Activated B cell treated with CpG ODN at 0.5 μM for 24 hours (primary cell): ENCODE measurements at regions of chr9 and their contacts with region 1.

Region 1: GRCh38 chr9:27333241-27334052 is 36.5 kb upstream of the EQTN start:
- DNase-seq: peak; percentile 48
- ATAC-seq: peak; percentile 96
- H3K4me3 Mint-ChIP-seq: no peak overlapping the region
- H3K27ac Mint-ChIP-seq: peak overlapping the region; percentile 36
- H3K4me1 Mint-ChIP-seq: peaks cover 13% of the 10 kb centered on the region
- H3K27me3 Mint-ChIP-seq: no peaks in the 10 kb centered on the region
- CTCF ChIP-seq: peak; percentile 38

Region 2: GRCh38 chr9:26502311-26502710 is 831.1 kb before region 1 on chr9:
- CTCF ChIA-PET with region 1: no interaction called
- POLR2A ChIA-PET with region 1: no interaction called
- intact Hi-C with region 1: no loop called
- DNase-seq: no peak
- ATAC-seq: no peak
- H3K4me3 Mint-ChIP-seq: no peak overlapping the region
- H3K27ac Mint-ChIP-seq: no peak overlapping the region
- H3K4me1 Mint-ChIP-seq: no peaks in the 10 kb centered on the region
- H3K27me3 Mint-ChIP-seq: no peaks in the 10 kb centered on the region
- CTCF ChIP-seq: no peak

Region 3: GRCh38 chr9:27108981-27109541 is 224.4 kb before region 1 on chr9 and contains the start of gene TEK:
- CTCF ChIA-PET with region 1: no interaction called
- POLR2A ChIA-PET with region 1: no interaction called
- intact Hi-C with region 1: no loop called
- DNase-seq: no peak
- ATAC-seq: no peak
- H3K4me3 Mint-ChIP-seq: no peak within 1 kb of the TSS
- H3K27ac Mint-ChIP-seq: no peak within 1 kb of the TSS
- H3K4me1 Mint-ChIP-seq: no peaks in the 10 kb centered on the region
- H3K27me3 Mint-ChIP-seq: peaks cover 3% of the 10 kb centered on the region
- CTCF ChIP-seq: no peak
- total RNA-seq, gene TEK: not detected in 2 replicates

Region 4: GRCh38 chr9:27365707-27366376 is 32.4 kb after region 1 on chr9:
- CTCF ChIA-PET with region 1: interaction called, 9 read pairs
- POLR2A ChIA-PET with region 1: no interaction called
- intact Hi-C with region 1: loop called (anchors 1 kb)
- DNase-seq: no peak
- ATAC-seq: peak; percentile 73
- H3K4me3 Mint-ChIP-seq: peak overlapping the region; percentile 65
- H3K27ac Mint-ChIP-seq: peak overlapping the region; percentile 63
- H3K4me1 Mint-ChIP-seq: peaks cover 61% of the 10 kb centered on the region
- H3K27me3 Mint-ChIP-seq: no peaks in the 10 kb centered on the region
- CTCF ChIP-seq: no peak

Region 5: DNA sequence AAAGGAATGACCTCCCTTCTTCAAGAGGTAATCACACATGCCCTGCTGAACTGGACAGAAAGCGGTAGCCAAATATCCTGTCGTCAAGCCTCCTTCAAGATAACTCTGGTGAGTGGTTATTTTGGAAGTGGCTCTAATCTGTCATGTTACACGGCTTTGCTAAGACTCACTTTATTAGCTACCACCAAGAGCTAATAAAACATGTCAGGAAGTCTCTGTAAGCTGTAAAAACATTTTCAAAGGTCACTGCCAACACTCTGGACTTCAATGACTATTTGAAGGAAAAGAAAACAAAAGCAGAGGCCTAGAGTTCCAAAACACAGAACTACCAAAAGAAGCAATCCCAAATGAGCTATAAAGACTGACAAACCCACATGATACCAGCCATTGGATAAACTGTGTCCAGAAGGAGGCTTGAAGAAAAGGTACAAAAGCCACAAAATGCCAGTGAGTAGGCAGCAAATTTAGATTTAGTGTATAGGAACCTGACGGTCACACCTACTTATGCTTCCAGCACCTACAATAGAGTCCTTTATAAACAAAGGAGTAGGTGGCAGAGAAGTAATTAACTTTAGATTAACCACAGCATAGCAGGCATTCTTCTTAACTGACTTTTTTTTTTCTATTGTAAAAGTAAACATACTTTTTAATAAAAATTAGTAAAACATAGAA is 60.8 kb after region 1 on chr9:
- CTCF ChIA-PET with region 1: interaction called, 11 read pairs
- POLR2A ChIA-PET with region 1: no interaction called
- intact Hi-C with region 1: no loop called
- DNase-seq: no peak
- ATAC-seq: no peak
- H3K4me3 Mint-ChIP-seq: no peak overlapping the region
- H3K27ac Mint-ChIP-seq: peak overlapping the region; percentile 80
- H3K4me1 Mint-ChIP-seq: peaks cover 69% of the 10 kb centered on the region
- H3K27me3 Mint-ChIP-seq: no peaks in the 10 kb centered on the region
- CTCF ChIP-seq: no peak

Region 6: DNA sequence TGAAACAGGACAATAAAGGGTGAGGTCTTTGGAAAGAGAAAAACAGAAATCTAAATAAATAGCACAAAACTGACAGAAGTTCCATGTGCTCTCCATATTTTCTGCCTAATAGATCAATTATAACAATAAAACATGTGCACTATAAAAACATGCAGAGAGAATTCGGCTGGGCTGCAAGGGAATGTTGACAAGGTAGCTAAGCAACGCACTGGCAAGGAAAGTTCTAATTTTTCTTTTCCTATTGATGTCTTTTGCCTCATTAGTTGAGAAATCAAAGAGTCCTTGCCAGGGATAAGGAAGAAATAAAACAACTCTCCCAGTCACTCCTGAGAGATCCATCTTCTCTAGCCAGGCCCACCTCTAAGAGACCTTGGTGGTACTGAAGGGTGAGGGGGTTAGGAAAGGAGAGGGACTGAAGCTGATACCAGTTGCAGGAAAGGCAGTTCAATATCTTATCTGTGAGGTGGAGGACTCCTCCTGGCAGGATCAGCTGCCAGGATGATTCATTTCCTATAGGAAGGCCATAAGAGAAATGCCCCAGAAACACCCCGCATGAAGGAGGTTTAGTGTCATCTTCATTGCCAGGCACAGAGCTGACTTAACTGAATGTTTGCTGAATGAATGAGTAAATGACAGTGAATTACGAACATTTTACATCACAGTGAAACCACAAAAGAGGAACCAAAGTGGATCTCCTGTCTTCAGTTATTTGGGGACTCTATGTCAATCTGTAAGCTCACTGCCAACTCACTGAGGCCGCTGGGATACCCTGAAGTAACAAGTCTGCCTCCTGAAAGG is 127.0 kb after region 1 on chr9:
- CTCF ChIA-PET with region 1: interaction called, 10 read pairs
- POLR2A ChIA-PET with region 1: no interaction called
- intact Hi-C with region 1: loop called (anchors 1 kb)
- DNase-seq: no peak
- ATAC-seq: peak; percentile 93
- H3K4me3 Mint-ChIP-seq: peak overlapping the region; percentile 66
- H3K27ac Mint-ChIP-seq: peak overlapping the region; percentile 86
- H3K4me1 Mint-ChIP-seq: peaks cover 61% of the 10 kb centered on the region
- H3K27me3 Mint-ChIP-seq: no peaks in the 10 kb centered on the region
- CTCF ChIP-seq: no peak

Region 7: DNA sequence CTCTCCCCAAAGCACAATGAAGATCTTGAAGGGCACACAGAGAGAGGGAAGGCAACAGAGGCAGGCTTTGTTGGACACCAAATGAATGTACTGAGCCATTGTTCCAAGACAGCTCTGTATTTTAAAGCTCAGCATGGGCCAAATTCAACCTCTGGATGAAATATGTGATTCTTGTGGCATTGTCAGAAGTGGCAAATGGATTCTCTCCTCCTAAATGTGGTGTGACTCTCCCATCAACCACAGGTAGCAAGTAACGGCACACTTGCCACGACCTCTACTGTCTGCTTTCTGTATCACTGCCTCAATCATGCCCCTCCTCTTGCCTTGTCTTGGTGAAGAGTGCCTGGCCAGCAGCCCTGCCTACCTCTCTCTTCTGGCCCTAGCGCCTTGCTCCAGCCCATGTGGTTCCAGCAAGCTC is 202.3 kb after region 1 on chr9:
- CTCF ChIA-PET with region 1: interaction called, 201 read pairs
- POLR2A ChIA-PET with region 1: interaction called, 38 read pairs
- intact Hi-C with region 1: no loop called
- DNase-seq: no peak
- ATAC-seq: peak; percentile 54
- H3K4me3 Mint-ChIP-seq: no peak overlapping the region
- H3K27ac Mint-ChIP-seq: no peak overlapping the region
- H3K4me1 Mint-ChIP-seq: peaks cover 16% of the 10 kb centered on the region
- H3K27me3 Mint-ChIP-seq: no peaks in the 10 kb centered on the region
- CTCF ChIP-seq: no peak

Region 8: DNA sequence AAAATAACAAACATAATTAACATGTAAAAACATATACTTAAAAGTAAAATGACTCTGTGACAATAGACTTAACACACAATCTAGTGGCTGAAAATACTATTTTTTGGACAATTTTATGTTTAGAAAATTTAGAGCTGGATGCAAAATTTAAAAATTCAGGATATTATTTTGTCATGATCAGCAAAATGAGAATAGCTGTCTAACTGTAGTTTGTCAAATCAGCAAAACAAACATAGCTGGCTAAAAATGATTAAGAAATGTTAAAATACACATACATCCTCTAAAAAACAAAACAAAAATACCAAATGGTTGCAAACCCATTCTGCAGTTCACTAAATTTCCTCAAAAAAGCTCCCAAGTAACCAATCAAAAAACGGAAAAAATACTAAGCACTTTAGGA is 221.3 kb after region 1 on chr9:
- CTCF ChIA-PET with region 1: interaction called, 94 read pairs
- POLR2A ChIA-PET with region 1: no interaction called
- intact Hi-C with region 1: no loop called
- DNase-seq: no peak
- ATAC-seq: no peak
- H3K4me3 Mint-ChIP-seq: no peak overlapping the region
- H3K27ac Mint-ChIP-seq: no peak overlapping the region
- H3K4me1 Mint-ChIP-seq: no peaks in the 10 kb centered on the region
- H3K27me3 Mint-ChIP-seq: no peaks in the 10 kb centered on the region
- CTCF ChIP-seq: no peak

Region 9: GRCh38 chr9:27799326-27799725 is 465.9 kb after region 1 on chr9:
- CTCF ChIA-PET with region 1: no interaction called
- POLR2A ChIA-PET with region 1: no interaction called
- intact Hi-C with region 1: no loop called
- DNase-seq: no peak
- ATAC-seq: no peak
- H3K4me3 Mint-ChIP-seq: no peak overlapping the region
- H3K27ac Mint-ChIP-seq: no peak overlapping the region
- H3K4me1 Mint-ChIP-seq: no peaks in the 10 kb centered on the region
- H3K27me3 Mint-ChIP-seq: no peaks in the 10 kb centered on the region
- CTCF ChIP-seq: no peak